B cell (primary cell): ENCODE measurements at regions of chr12 and their contacts with region 1.

Region 1: GRCh38 chr12:12803186-12803585 is 10.0 kb upstream of the DDX47 start:
- DNase-seq: peak; percentile 45
- ATAC-seq: peak; percentile 51
- H3K4me3 ChIP-seq: no peak overlapping the region
- H3K4me3 Mint-ChIP-seq: peak overlapping the region; percentile 80
- H3K27ac ChIP-seq: no peak overlapping the region
- H3K27ac Mint-ChIP-seq: peak overlapping the region; percentile 86
- H3K4me1 ChIP-seq: peaks cover 23 to 45% of the 10 kb centered on the region in 2 donors
- H3K4me1 Mint-ChIP-seq: peaks cover 56% of the 10 kb centered on the region
- H3K27me3 ChIP-seq: no peaks in the 10 kb centered on the region
- H3K27me3 Mint-ChIP-seq: no peaks in the 10 kb centered on the region
- CTCF ChIP-seq: no peak

Region 2: DNA sequence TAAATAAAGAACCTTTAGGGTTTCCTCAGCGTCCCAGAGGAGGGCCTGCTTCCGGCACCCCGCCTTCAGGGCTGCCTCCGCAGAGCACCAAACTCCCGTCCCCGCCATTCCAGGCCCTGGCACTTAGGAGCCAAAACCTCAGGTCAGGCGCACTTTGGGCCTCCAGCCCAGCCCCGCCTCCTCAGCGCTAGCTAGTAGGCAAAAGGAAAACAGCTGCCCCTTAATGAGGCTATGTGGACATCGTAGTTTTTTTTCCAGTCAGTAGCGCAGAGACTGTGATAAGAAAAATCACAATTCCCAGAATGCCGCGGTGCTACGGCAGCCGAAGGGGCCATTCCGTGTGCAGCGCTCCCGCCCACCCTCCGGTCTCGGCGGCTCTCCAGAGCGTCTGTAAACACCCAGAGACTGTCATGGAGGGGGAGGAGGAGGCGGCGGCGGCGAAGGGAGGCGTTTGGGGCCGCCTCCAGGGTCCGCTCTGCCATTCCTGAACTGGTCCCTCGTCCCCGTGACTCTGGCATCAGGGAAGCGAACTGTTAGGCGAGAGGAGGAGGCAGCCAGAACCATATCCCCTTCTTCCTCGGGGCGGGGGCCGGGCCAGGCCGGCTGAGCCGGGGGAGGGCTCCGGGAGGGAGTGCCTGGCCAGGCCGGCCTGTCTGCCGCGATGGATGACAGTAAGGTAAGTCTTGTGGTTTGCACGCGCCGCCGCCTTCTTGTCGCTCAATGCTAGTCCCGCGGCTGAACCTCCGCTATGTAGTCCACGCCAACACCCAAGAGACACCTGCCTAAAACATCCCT is 191.5 kb before region 1 on chr12 and contains the start of gene CREBL2:
- CTCF ChIA-PET with region 1: no interaction called
- POLR2A ChIA-PET with region 1: interaction called, 5 read pairs
- intact Hi-C with region 1: loop called (anchors 1 kb)
- DNase-seq: peak; percentile 94
- ATAC-seq: peak; percentile 91
- H3K4me3 ChIP-seq: peak within 1 kb of the TSS; percentile 65 to 100 (median 89)
- H3K4me3 Mint-ChIP-seq: peak within 1 kb of the TSS; percentile 97
- H3K27ac ChIP-seq: peak within 1 kb of the TSS; percentile 92 to 95
- H3K27ac Mint-ChIP-seq: peak within 1 kb of the TSS; percentile 98
- H3K4me1 ChIP-seq: peaks cover 16 to 24% of the 10 kb centered on the region in 2 donors
- H3K4me1 Mint-ChIP-seq: peaks cover 32% of the 10 kb centered on the region
- H3K27me3 ChIP-seq: no peaks in the 10 kb centered on the region
- H3K27me3 Mint-ChIP-seq: no peaks in the 10 kb centered on the region
- CTCF ChIP-seq: no peak
- total RNA-seq, gene CREBL2: 20.2 and 22.1 TPM in 2 replicates

Region 3: GRCh38 chr12:12716793-12717585 is 86.2 kb before region 1 on chr12 and contains the start of gene CDKN1B:
- CTCF ChIA-PET with region 1: no interaction called
- POLR2A ChIA-PET with region 1: interaction called, 3 read pairs
- intact Hi-C with region 1: loop called (anchors 1 kb)
- DNase-seq: peak; percentile 92
- ATAC-seq: peak; percentile 64
- H3K4me3 ChIP-seq: peak within 1 kb of the TSS; percentile 82 to 100 (median 96)
- H3K4me3 Mint-ChIP-seq: peak within 1 kb of the TSS; percentile 97
- H3K27ac ChIP-seq: peak within 1 kb of the TSS; percentile 94 to 96
- H3K27ac Mint-ChIP-seq: peak within 1 kb of the TSS; percentile 98
- H3K4me1 ChIP-seq: peaks cover 49 to 53% of the 10 kb centered on the region in 2 donors
- H3K4me1 Mint-ChIP-seq: peaks cover 66% of the 10 kb centered on the region
- H3K27me3 ChIP-seq: no peaks in the 10 kb centered on the region
- H3K27me3 Mint-ChIP-seq: no peaks in the 10 kb centered on the region
- CTCF ChIP-seq: no peak
- total RNA-seq, gene CDKN1B: 133 and 149 TPM in 2 replicates

Region 4: GRCh38 chr12:12999959-13000615 is 196.9 kb after region 1 on chr12 and contains the start of gene HEBP1:
- CTCF ChIA-PET with region 1: interaction called, 3 read pairs
- POLR2A ChIA-PET with region 1: no interaction called
- intact Hi-C with region 1: loop called (anchors 1 kb)
- DNase-seq: peak; percentile 96
- ATAC-seq: peak; percentile 89
- H3K4me3 ChIP-seq: peak within 1 kb of the TSS; percentile 63 to 92 (median 81)
- H3K4me3 Mint-ChIP-seq: peak within 1 kb of the TSS; percentile 90
- H3K27ac ChIP-seq: peak within 1 kb of the TSS; percentile 61 to 63
- H3K27ac Mint-ChIP-seq: peak within 1 kb of the TSS; percentile 80
- H3K4me1 ChIP-seq: peaks cover 11 to 20% of the 10 kb centered on the region in 2 donors
- H3K4me1 Mint-ChIP-seq: peaks cover 29% of the 10 kb centered on the region
- H3K27me3 ChIP-seq: peaks cover 0 to 3% (median 0%) of the 10 kb centered on the region in 4 experiments
- H3K27me3 Mint-ChIP-seq: no peaks in the 10 kb centered on the region
- CTCF ChIP-seq: no peak
- total RNA-seq, gene HEBP1: 11.2 and 14.5 TPM in 2 replicates

Region 5: GRCh38 chr12:14157088-14157747 is 1354.0 kb after region 1 on chr12:
- CTCF ChIA-PET with region 1: no interaction called
- POLR2A ChIA-PET with region 1: no interaction called
- intact Hi-C with region 1: loop called (anchors 10 kb)
- DNase-seq: peak; percentile 90
- ATAC-seq: peak; percentile 91
- H3K4me3 ChIP-seq: peak overlapping the region in 1 of 5 experiments; percentile 8
- H3K4me3 Mint-ChIP-seq: peak overlapping the region; percentile 29
- H3K27ac ChIP-seq: peak overlapping the region; percentile 85 to 88
- H3K27ac Mint-ChIP-seq: peak overlapping the region; percentile 90
- H3K4me1 ChIP-seq: peaks cover 63% of the 10 kb centered on the region in 2 donors
- H3K4me1 Mint-ChIP-seq: peaks cover 64% of the 10 kb centered on the region
- H3K27me3 ChIP-seq: no peaks in the 10 kb centered on the region
- H3K27me3 Mint-ChIP-seq: no peaks in the 10 kb centered on the region
- CTCF ChIP-seq: no peak